ENCODE measurements at regions of chr12 and their contacts with region 1.

Region 1: GRCh38 chr12:9331218-9331626 is 123.0 kb upstream of the PZP start:
- DNase-seq: peak; percentile 23
- ATAC-seq: peak; percentile 93
- H3K4me3 ChIP-seq: no peak overlapping the region
- H3K27ac ChIP-seq: peak overlapping the region; percentile 53
- H3K4me1 ChIP-seq: peaks cover 22% of the 10 kb centered on the region
- H3K27me3 ChIP-seq: no peaks in the 10 kb centered on the region
- CTCF ChIP-seq: peak; percentile 94 to 99 (median 98)
- EP300 ChIP-seq: no peak
- POLR2A ChIP-seq: no peak
- RAD21 ChIP-seq: peak; percentile 97

Region 2: GRCh38 chr12:9091891-9092598 is 239.2 kb before region 1 on chr12:
- CTCF ChIA-PET with region 1: no interaction called
- POLR2A ChIA-PET with region 1: no interaction called
- RAD21 ChIA-PET with region 1: no interaction called
- SMC1A ChIA-PET with region 1: no interaction called
- in situ Hi-C with region 1: no loop called
- intact Hi-C with region 1: no loop called
- DNase-seq: no peak
- ATAC-seq: no peak
- H3K4me3 ChIP-seq: no peak overlapping the region
- H3K27ac ChIP-seq: no peak overlapping the region
- H3K4me1 ChIP-seq: no peaks in the 10 kb centered on the region
- H3K27me3 ChIP-seq: no peaks in the 10 kb centered on the region; a peak in 2 of 4 replicates
- CTCF ChIP-seq: no peak
- EP300 ChIP-seq: no peak
- POLR2A ChIP-seq: no peak
- RAD21 ChIP-seq: no peak

Region 3: DNA sequence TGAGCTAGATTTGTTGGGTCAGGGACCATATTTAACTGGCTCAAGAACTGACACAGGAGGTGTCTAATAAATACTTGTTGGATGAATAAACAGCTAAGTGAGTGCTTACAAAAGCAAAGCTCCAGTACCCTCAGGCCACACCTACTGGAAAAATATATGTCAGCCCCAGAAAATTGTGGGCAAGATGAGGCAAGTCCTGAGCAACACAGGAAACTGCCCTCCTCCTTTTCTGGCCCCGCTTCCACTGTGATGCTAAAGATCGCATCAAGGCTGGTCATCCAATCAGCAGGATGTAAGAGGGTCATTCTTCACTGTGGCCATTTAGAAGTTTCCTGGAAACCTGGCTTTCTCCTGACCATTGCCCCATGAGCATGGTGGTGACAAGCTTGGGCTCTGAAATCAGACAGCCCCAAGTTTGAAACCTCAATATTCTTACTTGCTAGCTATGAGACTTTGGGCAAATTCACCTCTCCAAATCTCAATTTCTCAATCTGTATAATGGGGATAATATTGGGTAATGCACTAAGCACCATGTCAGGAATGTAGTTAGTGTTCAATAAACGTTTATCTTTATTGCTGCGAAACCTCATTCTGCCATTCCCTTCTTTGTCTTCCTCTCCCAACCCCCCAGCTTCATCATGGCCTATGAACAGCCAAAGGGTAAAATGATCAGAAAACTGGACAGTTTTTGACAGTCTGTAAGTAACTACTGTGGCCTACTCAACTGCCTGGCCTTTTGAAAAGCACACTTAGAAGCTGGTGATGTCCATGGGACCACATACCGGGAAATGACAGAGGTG is 16.3 kb after region 1 on chr12:
- CTCF ChIA-PET with region 1: interaction called, 13 read pairs
- POLR2A ChIA-PET with region 1: no interaction called
- RAD21 ChIA-PET with region 1: interaction called, 7 read pairs
- SMC1A ChIA-PET with region 1: interaction called, 6 read pairs
- in situ Hi-C with region 1: no loop called
- intact Hi-C with region 1: no loop called
- DNase-seq: no peak
- ATAC-seq: no peak
- H3K4me3 ChIP-seq: no peak overlapping the region
- H3K27ac ChIP-seq: no peak overlapping the region
- H3K4me1 ChIP-seq: peaks cover 3% of the 10 kb centered on the region; the same call in 1 of the 2 replicates
- H3K27me3 ChIP-seq: no peaks in the 10 kb centered on the region
- CTCF ChIP-seq: no peak
- EP300 ChIP-seq: no peak
- POLR2A ChIP-seq: no peak
- RAD21 ChIP-seq: no peak

Region 4: DNA sequence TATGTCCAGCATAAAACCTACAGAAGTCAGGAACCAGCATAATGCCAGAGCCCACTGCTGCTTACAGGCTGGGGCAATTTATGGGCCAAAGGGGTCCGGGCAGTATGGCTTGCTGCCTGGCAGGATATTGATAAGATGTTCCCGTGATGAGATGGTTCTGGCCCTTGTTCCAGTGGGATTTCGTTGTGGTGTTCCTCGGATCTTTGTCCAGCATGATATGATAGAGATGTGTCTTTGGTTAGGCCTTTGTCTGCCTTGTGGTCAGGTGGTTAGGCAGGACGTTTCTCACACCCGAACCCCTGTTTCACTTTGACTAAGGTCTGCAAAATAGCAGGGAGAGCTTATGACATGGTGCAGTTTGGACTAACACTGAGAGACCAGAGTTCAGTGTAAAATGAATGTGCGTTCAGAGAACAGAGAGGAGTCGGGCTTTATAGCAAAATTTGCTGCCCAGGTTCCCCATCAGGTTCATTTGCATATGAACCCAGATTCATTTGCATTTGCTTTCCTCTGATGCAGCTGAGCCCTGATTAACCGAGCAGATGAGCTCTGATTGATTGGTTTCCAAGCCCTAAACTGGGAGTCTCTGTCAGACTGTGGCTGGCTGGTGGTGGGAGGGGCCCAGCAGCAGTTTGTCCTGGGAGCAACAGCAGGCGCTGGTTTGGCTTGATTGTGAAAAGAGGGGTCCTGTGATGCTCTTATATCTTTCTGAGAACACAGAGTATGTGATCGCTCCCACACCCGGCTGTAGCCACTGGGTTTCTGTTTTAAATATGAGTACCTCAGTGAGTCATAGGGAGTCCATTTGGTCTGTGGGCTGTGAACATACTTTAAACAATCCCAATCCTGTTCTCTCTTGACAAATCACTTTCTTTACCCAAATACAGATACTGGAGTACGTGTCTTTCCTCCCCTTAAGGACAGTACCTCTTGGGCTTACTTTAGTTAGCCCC is 33.3 kb after region 1 on chr12:
- CTCF ChIA-PET with region 1: interaction called, 80 read pairs
- POLR2A ChIA-PET with region 1: interaction called, 10 read pairs
- RAD21 ChIA-PET with region 1: interaction called, 46 read pairs
- SMC1A ChIA-PET with region 1: interaction called, 27 read pairs
- in situ Hi-C with region 1: no loop called
- intact Hi-C with region 1: loop called (anchors 1 kb)
- DNase-seq: peak; percentile 98
- ATAC-seq: peak; percentile 89
- H3K4me3 ChIP-seq: peak overlapping the region; percentile 29; the same call in 1 of the 2 replicates
- H3K27ac ChIP-seq: peak overlapping the region; percentile 88
- H3K4me1 ChIP-seq: peaks cover 42% of the 10 kb centered on the region
- H3K27me3 ChIP-seq: no peaks in the 10 kb centered on the region
- CTCF ChIP-seq: no peak
- EP300 ChIP-seq: peak; percentile 80 to 82
- POLR2A ChIP-seq: peak; percentile 89
- RAD21 ChIP-seq: 0 out of 2 replicates have a peak, but pooled peaks have one; percentile 9

Region 5: DNA sequence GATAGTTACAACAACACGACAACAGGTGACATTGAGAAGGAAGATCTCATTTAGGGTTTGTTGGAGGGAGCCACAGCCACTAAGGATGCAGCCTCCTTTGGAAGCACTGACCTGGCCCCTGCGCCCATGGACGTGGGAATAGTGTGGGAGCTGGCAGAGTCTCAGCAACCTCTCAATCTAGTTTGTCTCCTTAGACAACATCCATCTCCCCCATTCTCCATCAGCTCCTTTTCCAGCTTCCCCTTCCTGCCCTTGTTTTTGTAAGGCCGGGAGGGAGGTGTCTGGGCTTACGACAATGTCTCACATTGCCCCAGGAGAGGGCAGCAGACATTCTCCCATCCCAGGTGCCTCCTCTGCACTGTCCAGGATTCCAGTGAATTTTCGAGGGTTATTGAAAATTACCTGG is 47.2 kb after region 1 on chr12:
- CTCF ChIA-PET with region 1: interaction called, 11 read pairs
- POLR2A ChIA-PET with region 1: no interaction called
- RAD21 ChIA-PET with region 1: interaction called, 4 read pairs
- SMC1A ChIA-PET with region 1: no interaction called
- in situ Hi-C with region 1: no loop called
- intact Hi-C with region 1: no loop called
- DNase-seq: no peak
- ATAC-seq: peak; percentile 54
- H3K4me3 ChIP-seq: no peak overlapping the region
- H3K27ac ChIP-seq: no peak overlapping the region
- H3K4me1 ChIP-seq: no peaks in the 10 kb centered on the region
- H3K27me3 ChIP-seq: peaks cover 0 to 2% of the 10 kb centered on the region in 2 experiments; a peak in 2 of 4 replicates
- CTCF ChIP-seq: peak; percentile 24 to 29 (median 25); a peak in 3 of 6 replicates
- EP300 ChIP-seq: no peak
- POLR2A ChIP-seq: no peak
- RAD21 ChIP-seq: peak; percentile 47

Region 6: GRCh38 chr12:9464408-9464807 is 133.2 kb after region 1 on chr12:
- CTCF ChIA-PET with region 1: interaction called, 18 read pairs
- POLR2A ChIA-PET with region 1: no interaction called
- RAD21 ChIA-PET with region 1: interaction called, 12 read pairs
- SMC1A ChIA-PET with region 1: interaction called, 17 read pairs
- in situ Hi-C with region 1: no loop called
- intact Hi-C with region 1: loop called (anchors 1 kb)
- DNase-seq: no peak
- ATAC-seq: no peak
- H3K4me3 ChIP-seq: no peak overlapping the region
- H3K27ac ChIP-seq: no peak overlapping the region
- H3K4me1 ChIP-seq: no peaks in the 10 kb centered on the region
- H3K27me3 ChIP-seq: no peaks in the 10 kb centered on the region
- CTCF ChIP-seq: no peak
- EP300 ChIP-seq: no peak
- POLR2A ChIP-seq: no peak
- RAD21 ChIP-seq: no peak

Region 7: GRCh38 chr12:9634177-9634803 is 303.1 kb after region 1 on chr12:
- CTCF ChIA-PET with region 1: interaction called, 4 read pairs
- POLR2A ChIA-PET with region 1: no interaction called
- RAD21 ChIA-PET with region 1: interaction called, 5 read pairs
- SMC1A ChIA-PET with region 1: interaction called, 3 read pairs
- in situ Hi-C with region 1: no loop called
- intact Hi-C with region 1: loop called (anchors 1 kb)
- DNase-seq: no peak
- ATAC-seq: peak; percentile 79
- H3K4me3 ChIP-seq: no peak overlapping the region
- H3K27ac ChIP-seq: no peak overlapping the region
- H3K4me1 ChIP-seq: peaks cover 15% of the 10 kb centered on the region; the same call in 1 of the 2 replicates
- H3K27me3 ChIP-seq: no peaks in the 10 kb centered on the region
- CTCF ChIP-seq: peak; percentile 52 to 71 (median 61); a peak in 5 of 6 replicates
- EP300 ChIP-seq: no peak
- POLR2A ChIP-seq: no peak
- RAD21 ChIP-seq: peak; percentile 91